MCF 10A (cell line): ENCODE measurements at regions of chr16 and their contacts with region 1.

Region 1: DNA sequence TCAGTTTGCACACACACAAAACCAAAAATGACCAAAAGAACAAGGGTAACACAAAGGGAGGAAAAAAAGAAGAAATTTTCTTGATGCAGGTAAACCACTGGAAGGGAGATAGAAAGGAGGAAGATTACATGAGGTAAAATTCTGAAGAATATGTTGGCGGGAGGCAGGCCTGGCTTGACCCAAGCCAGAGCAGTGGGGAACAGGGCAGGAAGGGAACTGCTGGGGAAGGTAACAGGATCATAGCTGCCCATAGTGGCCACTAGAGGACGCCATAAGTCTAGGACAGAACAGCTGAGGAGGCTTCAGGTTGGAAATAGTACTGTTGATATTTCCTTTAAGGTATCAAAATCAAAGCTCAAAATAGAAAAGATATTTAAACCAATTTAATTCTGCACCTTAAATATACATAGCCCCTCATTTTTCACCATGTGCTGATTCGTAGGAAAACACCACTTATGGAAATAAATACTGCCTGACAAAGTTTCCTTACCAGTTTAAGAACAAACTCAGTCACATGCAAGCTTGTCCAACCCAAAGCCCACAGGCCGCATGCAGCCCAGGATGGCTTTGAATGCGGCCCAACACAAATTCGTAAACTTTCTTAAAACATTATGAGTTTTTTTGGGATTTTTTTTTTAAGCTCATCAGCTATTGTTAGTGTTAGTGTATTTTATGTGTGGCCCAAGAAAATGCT is 15.5 kb downstream of the VPS35 start:
- DNase-seq: peak; percentile 69
- H3K4me3 Mint-ChIP-seq: no peak overlapping the region
- H3K27ac Mint-ChIP-seq: no peak overlapping the region
- H3K4me1 Mint-ChIP-seq: no peaks in the 10 kb centered on the region
- H3K27me3 Mint-ChIP-seq: no peaks in the 10 kb centered on the region
- CTCF ChIP-seq: peak; percentile 89

Region 2: GRCh38 chr16:46629331-46630219 is 43.9 kb before region 1 on chr16:
- CTCF ChIA-PET with region 1: interaction called, 10 read pairs
- POLR2A ChIA-PET with region 1: no interaction called
- intact Hi-C with region 1: no loop called
- DNase-seq: peak; percentile 68
- H3K4me3 Mint-ChIP-seq: peak overlapping the region; percentile 22
- H3K27ac Mint-ChIP-seq: peak overlapping the region; percentile 61
- H3K4me1 Mint-ChIP-seq: peaks cover 11% of the 10 kb centered on the region
- H3K27me3 Mint-ChIP-seq: peaks cover 6% of the 10 kb centered on the region
- CTCF ChIP-seq: peak; percentile 50

Region 3: DNA sequence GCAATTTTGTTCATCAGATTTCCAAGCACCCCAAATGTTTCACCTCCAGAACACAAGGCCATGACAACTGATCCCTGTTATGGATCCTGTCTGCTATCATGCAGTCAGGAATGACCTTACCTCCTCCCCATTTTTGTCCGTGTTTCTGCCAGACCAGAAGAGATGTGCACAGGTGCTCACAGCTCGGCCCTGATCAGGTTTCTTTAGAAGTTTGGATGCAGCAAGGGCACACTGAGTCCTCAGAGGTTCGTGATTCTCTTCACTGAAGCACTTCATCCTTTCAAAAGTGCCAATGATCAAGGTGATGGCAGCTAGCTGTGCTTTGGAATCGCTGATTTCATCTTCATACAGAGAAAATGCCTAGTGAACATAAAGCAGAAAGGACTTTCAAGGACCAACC is 11.3 kb before region 1 on chr16:
- CTCF ChIA-PET with region 1: interaction called, 27 read pairs
- POLR2A ChIA-PET with region 1: interaction called, 5 read pairs
- intact Hi-C with region 1: no loop called
- DNase-seq: no peak
- H3K4me3 Mint-ChIP-seq: no peak overlapping the region
- H3K27ac Mint-ChIP-seq: no peak overlapping the region
- H3K4me1 Mint-ChIP-seq: no peaks in the 10 kb centered on the region
- H3K27me3 Mint-ChIP-seq: no peaks in the 10 kb centered on the region
- CTCF ChIP-seq: no peak